H1 (cell line): ENCODE measurements at regions of chr15 and their contacts with region 1.

Region 1: DNA sequence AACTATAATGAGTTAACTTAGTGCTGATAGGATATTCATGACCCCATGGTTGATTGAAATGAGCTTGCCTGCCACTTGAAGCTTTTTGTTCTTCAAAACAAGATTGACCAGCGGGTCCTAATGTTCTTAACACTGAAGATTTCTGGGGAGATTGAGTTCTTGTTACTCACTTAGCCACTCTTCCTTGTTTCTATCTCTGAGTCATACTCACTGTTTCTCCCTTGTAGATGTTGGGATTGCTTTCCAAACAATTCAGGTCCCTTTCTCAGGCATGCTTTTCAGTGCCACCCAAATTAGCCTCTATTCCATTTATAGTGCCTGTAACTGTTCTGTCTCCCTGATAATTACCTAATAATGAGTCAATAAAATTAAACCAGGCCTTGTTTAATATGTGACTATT is 517.0 kb downstream of the SQOR start:
- DNase-seq: no peak
- H3K4me3 ChIP-seq: no peak overlapping the region
- H3K27ac ChIP-seq: no peak overlapping the region
- H3K4me1 ChIP-seq: no peaks in the 10 kb centered on the region
- H3K27me3 ChIP-seq: no peaks in the 10 kb centered on the region
- CTCF ChIP-seq: no peak
- EP300 ChIP-seq: no peak
- POLR2A ChIP-seq: no peak
- RAD21 ChIP-seq: no peak

Region 2: DNA sequence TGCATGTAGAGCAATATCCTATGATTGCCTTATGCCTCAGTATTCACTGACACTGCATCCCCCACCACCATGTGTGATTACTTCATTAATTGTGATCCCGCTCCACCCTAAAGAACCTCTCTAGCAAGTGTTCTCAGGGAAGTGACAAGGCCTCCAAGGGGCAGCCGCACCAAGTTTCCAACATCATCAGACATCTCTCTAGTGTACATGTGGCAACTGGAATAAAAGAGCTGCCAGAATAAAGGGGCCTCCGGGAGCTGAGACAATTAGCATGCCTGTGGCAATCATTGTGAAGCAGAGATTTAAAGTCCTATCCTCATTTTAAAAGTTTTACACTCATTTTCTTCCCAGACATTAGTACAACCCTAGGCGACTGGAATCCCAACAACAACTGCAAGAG is 663.5 kb after region 1 on chr15:
- CTCF ChIA-PET with region 1: no interaction called
- POLR2A ChIA-PET with region 1: interaction called, 10 read pairs
- DNase-seq: no peak
- H3K4me3 ChIP-seq: no peak overlapping the region
- H3K27ac ChIP-seq: no peak overlapping the region
- H3K4me1 ChIP-seq: no peaks in the 10 kb centered on the region
- H3K27me3 ChIP-seq: no peaks in the 10 kb centered on the region
- CTCF ChIP-seq: no peak
- EP300 ChIP-seq: no peak
- POLR2A ChIP-seq: no peak
- RAD21 ChIP-seq: no peak